ENCODE measurements at regions of chr4 and their contacts with region 1.

Region 1: DNA sequence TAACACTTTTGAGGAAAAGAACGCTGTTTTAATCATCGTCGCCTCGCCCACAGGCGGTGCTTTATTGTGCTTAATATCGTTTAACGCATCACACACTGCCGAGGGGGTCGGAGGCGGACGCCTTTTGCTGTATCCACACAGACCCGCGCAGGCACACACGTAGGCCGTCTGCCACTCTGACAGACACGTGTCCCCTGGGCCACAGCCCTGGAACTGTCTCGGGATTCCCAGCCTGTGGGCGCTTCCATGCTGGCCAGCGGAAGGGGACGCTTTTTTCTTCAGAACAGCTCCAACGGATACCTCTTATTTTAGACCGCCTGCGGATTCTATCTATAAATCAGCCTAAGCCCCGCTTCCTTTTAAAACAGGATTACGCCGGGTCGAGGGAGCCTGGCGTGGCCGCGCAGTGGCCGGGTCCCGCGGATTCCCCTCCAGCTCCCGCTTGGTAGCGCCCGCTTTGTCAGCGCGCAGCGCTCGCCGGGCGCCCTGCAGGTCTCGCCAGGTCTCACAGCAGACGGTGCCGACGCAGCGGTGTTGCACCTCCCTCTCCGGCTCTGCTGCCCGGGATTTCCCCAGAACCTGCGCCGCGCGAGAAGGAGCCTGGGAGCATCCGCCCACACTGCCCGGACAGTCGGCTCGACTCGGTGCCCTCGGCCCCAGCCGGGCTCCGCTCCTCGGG is at the start of gene NOCT:
- DNase-seq: peak; percentile 97
- H3K4me3 Mint-ChIP-seq: peak within 1 kb of the TSS; percentile 93
- H3K27ac Mint-ChIP-seq: peak within 1 kb of the TSS; percentile 96
- H3K4me1 Mint-ChIP-seq: peaks cover 35% of the 10 kb centered on the region
- H3K27me3 Mint-ChIP-seq: no peaks in the 10 kb centered on the region
- total RNA-seq, gene NOCT: 21.3 and 25.3 TPM in 2 replicates

Region 2: GRCh38 chr4:138242076-138242833 is 773.2 kb before region 1 on chr4 and contains the start of gene SLC7A11:
- intact Hi-C with region 1: loop called (anchors 10 kb)
- DNase-seq: peak; percentile 91
- H3K4me3 Mint-ChIP-seq: peak within 1 kb of the TSS; percentile 93
- H3K27ac Mint-ChIP-seq: peak within 1 kb of the TSS; percentile 95
- H3K4me1 Mint-ChIP-seq: peaks cover 28% of the 10 kb centered on the region
- H3K27me3 Mint-ChIP-seq: no peaks in the 10 kb centered on the region
- total RNA-seq, gene SLC7A11: 1.8 and 1.9 TPM in 2 replicates

Region 3: GRCh38 chr4:138996090-138996489 is 19.3 kb before region 1 on chr4:
- intact Hi-C with region 1: no loop called
- DNase-seq: no peak
- H3K4me3 Mint-ChIP-seq: no peak overlapping the region
- H3K27ac Mint-ChIP-seq: no peak overlapping the region
- H3K4me1 Mint-ChIP-seq: no peaks in the 10 kb centered on the region
- H3K27me3 Mint-ChIP-seq: peaks cover 9% of the 10 kb centered on the region

Region 4: GRCh38 chr4:139083956-139084803 is 68.8 kb after region 1 on chr4:
- intact Hi-C with region 1: loop called (anchors 1 kb)
- DNase-seq: peak; percentile 95
- H3K4me3 Mint-ChIP-seq: peak overlapping the region; percentile 100
- H3K27ac Mint-ChIP-seq: peak overlapping the region; percentile 100
- H3K4me1 Mint-ChIP-seq: peaks cover 30% of the 10 kb centered on the region
- H3K27me3 Mint-ChIP-seq: peaks cover 2% of the 10 kb centered on the region

Region 5: DNA sequence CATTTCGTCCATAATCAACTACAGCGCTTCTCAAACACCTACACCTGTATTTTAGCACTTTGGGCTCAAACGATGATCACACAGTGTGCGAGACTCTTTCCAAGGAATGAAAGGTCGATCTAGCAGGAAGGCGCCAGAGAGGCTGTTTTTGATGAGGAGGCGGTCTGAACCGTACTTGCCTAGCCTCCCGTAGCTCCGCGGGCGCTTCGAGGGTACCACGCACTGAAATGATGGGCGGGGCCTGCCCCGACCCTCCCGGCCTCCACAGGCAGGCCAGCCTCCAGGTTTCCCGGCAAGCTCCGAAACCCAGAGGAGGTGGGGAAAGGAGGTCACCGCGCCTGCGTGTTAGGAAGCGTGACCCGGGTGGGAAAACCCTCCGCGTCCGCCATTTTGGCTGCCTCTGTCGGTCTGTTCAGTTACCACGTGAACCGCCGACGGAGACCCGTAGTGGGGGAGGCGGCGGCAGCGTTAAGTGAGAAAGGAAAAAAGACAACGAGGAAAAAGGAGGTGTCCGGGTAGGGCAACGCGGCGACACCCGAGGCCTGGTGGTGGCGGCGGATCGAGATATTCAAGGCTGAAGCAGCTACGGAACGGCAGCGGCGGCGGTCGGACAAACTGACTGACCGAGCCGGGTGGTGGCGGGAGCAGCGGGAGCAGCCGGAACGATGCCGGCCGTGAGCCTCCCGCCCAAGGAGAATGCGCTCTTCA is 285.9 kb after region 1 on chr4 and contains the start of gene NAA15:
- intact Hi-C with region 1: loop called (anchors 2 kb)
- DNase-seq: peak; percentile 99
- H3K4me3 Mint-ChIP-seq: peak within 1 kb of the TSS; percentile 99
- H3K27ac Mint-ChIP-seq: peak within 1 kb of the TSS; percentile 100
- H3K4me1 Mint-ChIP-seq: peaks cover 52% of the 10 kb centered on the region
- H3K27me3 Mint-ChIP-seq: no peaks in the 10 kb centered on the region
- total RNA-seq, gene NAA15: 114 and 115 TPM in 2 replicates

Region 6: GRCh38 chr4:140103676-140104075 is 1088.3 kb after region 1 on chr4:
- intact Hi-C with region 1: loop called (anchors 10 kb)
- DNase-seq: peak; percentile 83
- H3K4me3 Mint-ChIP-seq: peak overlapping the region; percentile 37
- H3K27ac Mint-ChIP-seq: peak overlapping the region; percentile 79
- H3K4me1 Mint-ChIP-seq: peaks cover 51% of the 10 kb centered on the region
- H3K27me3 Mint-ChIP-seq: peaks cover 17% of the 10 kb centered on the region

Measured in activated CD4-positive, alpha-beta T cell treated with anti-CD3 and anti-CD28 coated beads, Interleukin-2, amount 10 ng/mL, durations not matched to agents 24 days and 14 days (primary cell).